Endothelial cell of umbilical vein (primary cell): ENCODE measurements at regions of chr1 and their contacts with region 1.

Region 1: DNA sequence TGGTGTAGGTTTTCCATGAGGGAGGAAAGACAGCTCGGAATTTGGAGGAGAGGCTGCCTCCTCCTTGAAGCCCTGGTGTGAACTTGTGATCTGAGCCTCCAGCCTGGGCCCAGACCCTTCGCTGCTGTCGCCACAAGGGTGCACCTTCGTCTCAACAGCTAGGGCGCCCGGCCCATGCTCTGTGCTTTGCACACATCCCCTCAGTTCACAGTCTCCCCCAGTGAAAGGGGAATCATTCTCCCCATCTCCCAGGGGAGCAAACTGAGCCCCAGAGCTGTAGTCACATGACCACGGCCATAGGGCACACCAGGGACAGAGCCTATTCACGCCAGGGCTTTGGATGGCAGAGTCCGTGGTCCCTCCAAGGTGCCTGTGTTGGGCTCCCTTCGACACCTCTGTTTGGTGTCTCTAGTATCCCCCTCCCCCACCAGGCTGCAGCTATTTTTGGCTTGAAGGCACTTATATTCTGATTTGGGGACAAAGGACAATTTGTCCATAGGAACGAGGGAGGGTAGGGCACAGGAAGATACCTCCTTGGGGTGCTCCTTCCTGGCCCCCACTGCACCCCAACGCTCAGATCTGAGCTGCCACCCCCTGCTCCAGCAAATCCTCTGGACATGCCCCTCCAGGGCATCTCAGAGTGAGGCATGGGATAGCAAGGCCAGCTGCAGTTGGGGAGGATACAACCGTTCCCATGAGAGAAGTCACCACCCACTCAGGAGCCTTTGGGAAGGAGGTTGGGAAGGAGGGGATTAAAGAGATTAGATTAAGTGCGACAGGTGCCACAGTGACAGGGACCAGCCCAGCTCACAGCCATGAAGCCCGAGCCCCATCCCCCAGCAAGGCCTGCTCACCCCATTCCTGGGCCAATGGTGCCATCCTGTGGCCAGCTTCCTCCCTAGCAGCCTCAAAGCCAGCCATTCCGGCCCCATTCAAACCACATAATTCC is 15.7 kb downstream of the MATN1 start:
- DNase-seq: peak; percentile 50
- H3K4me3 ChIP-seq: no peak overlapping the region
- H3K27ac ChIP-seq: no peak overlapping the region
- H3K4me1 ChIP-seq: no peaks in the 10 kb centered on the region
- H3K27me3 ChIP-seq: peaks cover 0 to 3% of the 10 kb centered on the region in 2 experiments
- CTCF ChIP-seq: peak; percentile 84 to 88
- POLR2A ChIP-seq: no peak

Region 2: GRCh38 chr1:29245876-29246275 is 1461.8 kb before region 1 on chr1:
- CTCF ChIA-PET with region 1: interaction called, 16 read pairs
- POLR2A ChIA-PET with region 1: no interaction called
- dilution Hi-C with region 1: no loop called
- intact Hi-C with region 1: loop called (anchors 1 kb)
- DNase-seq: peak; percentile 11
- H3K4me3 ChIP-seq: no peak overlapping the region
- H3K27ac ChIP-seq: no peak overlapping the region
- H3K4me1 ChIP-seq: no peaks in the 10 kb centered on the region
- H3K27me3 ChIP-seq: peaks cover 0 to 1% of the 10 kb centered on the region in 2 experiments
- CTCF ChIP-seq: peak; percentile 21 to 48
- POLR2A ChIP-seq: no peak

Region 3: DNA sequence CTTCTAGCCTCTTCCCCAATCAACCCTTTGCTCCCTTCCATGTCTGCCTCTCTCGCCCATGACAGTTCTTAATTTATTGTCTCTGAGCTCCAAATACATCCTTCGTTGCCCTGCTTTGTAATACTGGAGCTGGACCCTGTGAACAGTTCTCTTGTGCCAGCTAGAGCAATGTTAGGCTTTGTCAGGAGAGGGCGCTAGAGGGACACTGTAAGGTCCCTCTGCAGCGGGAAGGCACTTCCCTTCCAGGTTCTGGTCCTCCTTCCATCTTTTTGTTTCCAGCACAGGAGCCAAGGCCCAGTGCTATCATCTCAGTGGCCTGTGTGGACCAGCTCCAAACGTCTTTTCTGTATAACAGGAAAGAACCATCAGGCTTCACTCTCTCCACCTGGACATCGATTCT is 1375.5 kb before region 1 on chr1:
- CTCF ChIA-PET with region 1: interaction called, 17 read pairs
- POLR2A ChIA-PET with region 1: no interaction called
- dilution Hi-C with region 1: no loop called
- intact Hi-C with region 1: loop called (anchors 1 kb)
- DNase-seq: peak; percentile 22
- H3K4me3 ChIP-seq: no peak overlapping the region
- H3K27ac ChIP-seq: no peak overlapping the region
- H3K4me1 ChIP-seq: no peaks in the 10 kb centered on the region
- H3K27me3 ChIP-seq: peaks cover 2 to 5% of the 10 kb centered on the region in 2 experiments
- CTCF ChIP-seq: peak; percentile 27 to 51
- POLR2A ChIP-seq: no peak

Region 4: GRCh38 chr1:29698033-29698432 is 1009.7 kb before region 1 on chr1:
- CTCF ChIA-PET with region 1: interaction called, 4 read pairs
- POLR2A ChIA-PET with region 1: no interaction called
- dilution Hi-C with region 1: no loop called
- intact Hi-C with region 1: loop called (anchors 2 kb)
- DNase-seq: no peak
- H3K4me3 ChIP-seq: no peak overlapping the region
- H3K27ac ChIP-seq: no peak overlapping the region
- H3K4me1 ChIP-seq: no peaks in the 10 kb centered on the region
- H3K27me3 ChIP-seq: peaks cover 0 to 4% of the 10 kb centered on the region in 2 experiments
- CTCF ChIP-seq: peak; percentile 36 to 50
- POLR2A ChIP-seq: no peak

Region 5: DNA sequence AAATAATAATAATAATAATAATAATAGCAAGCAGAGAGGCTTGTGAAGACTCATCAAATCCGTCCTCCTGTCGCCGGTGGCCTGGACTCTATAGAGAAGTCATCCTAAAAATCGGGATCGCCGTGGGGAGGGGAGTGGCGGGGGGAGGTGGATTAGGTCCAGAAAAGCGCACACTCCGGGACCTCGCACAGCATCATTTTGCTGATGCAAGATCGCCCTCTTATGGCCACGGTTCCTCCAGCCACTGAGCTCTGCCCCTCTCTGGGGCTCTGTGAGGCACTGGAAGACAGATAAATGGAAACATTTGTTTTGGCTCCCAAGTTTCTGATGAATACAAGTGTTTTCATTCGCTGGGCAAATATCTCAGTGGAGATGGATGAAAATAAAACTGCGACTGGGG is 596.3 kb before region 1 on chr1:
- CTCF ChIA-PET with region 1: no interaction called
- POLR2A ChIA-PET with region 1: no interaction called
- dilution Hi-C with region 1: no loop called
- intact Hi-C with region 1: loop called (anchors 1 kb)
- DNase-seq: peak; percentile 18
- H3K4me3 ChIP-seq: no peak overlapping the region
- H3K27ac ChIP-seq: no peak overlapping the region
- H3K4me1 ChIP-seq: no peaks in the 10 kb centered on the region
- H3K27me3 ChIP-seq: peaks cover 0 to 1% of the 10 kb centered on the region in 2 experiments
- CTCF ChIP-seq: peak; percentile 53 to 56
- POLR2A ChIP-seq: no peak

Region 6: GRCh38 chr1:30668024-30668423 is 39.7 kb before region 1 on chr1:
- CTCF ChIA-PET with region 1: no interaction called
- POLR2A ChIA-PET with region 1: no interaction called
- dilution Hi-C with region 1: no loop called
- intact Hi-C with region 1: no loop called
- DNase-seq: no peak
- H3K4me3 ChIP-seq: no peak overlapping the region
- H3K27ac ChIP-seq: no peak overlapping the region
- H3K4me1 ChIP-seq: no peaks in the 10 kb centered on the region
- H3K27me3 ChIP-seq: no peaks in the 10 kb centered on the region
- CTCF ChIP-seq: no peak
- POLR2A ChIP-seq: no peak